ENCODE measurements at regions of chr2 and their contacts with region 1.

Region 1: GRCh38 chr2:26061539-26061938 is 27.7 kb downstream of the RAB10 start:
- DNase-seq: no peak
- ATAC-seq: no peak
- H3K4me3 ChIP-seq: no peak overlapping the region
- H3K4me3 Mint-ChIP-seq: no peak overlapping the region
- H3K27ac ChIP-seq: no peak overlapping the region
- H3K27ac Mint-ChIP-seq: no peak overlapping the region
- H3K4me1 ChIP-seq: peaks cover 2 to 20% of the 10 kb centered on the region in 2 experiments
- H3K4me1 Mint-ChIP-seq: peaks cover 45 to 49% (median 47%) of the 10 kb centered on the region in 3 donors
- H3K27me3 ChIP-seq: no peaks in the 10 kb centered on the region
- H3K27me3 Mint-ChIP-seq: no peaks in the 10 kb centered on the region

Region 2: GRCh38 chr2:26033818-26034636 is 27.5 kb before region 1 on chr2 and contains the start of gene RAB10:
- CTCF ChIA-PET with region 1: no interaction called
- POLR2A ChIA-PET with region 1: no interaction called
- DNase-seq: peak; percentile 95 to 99 (median 98)
- ATAC-seq: peak; percentile 84 to 94 (median 89)
- H3K4me3 ChIP-seq: peak within 1 kb of the TSS; percentile 87 to 97
- H3K4me3 Mint-ChIP-seq: peak within 1 kb of the TSS; percentile 94 to 95 (median 94)
- H3K27ac ChIP-seq: peak within 1 kb of the TSS; percentile 86
- H3K27ac Mint-ChIP-seq: peak within 1 kb of the TSS; percentile 93 to 95
- H3K4me1 ChIP-seq: peaks cover 17 to 40% of the 10 kb centered on the region in 2 experiments
- H3K4me1 Mint-ChIP-seq: peaks cover 36 to 56% (median 46%) of the 10 kb centered on the region in 3 donors
- H3K27me3 ChIP-seq: no peaks in the 10 kb centered on the region
- H3K27me3 Mint-ChIP-seq: no peaks in the 10 kb centered on the region
- total RNA-seq, gene RAB10: 35.0 to 78.7 (median 71.2) TPM

Region 3: GRCh38 chr2:26043862-26044696 is 17.5 kb before region 1 on chr2:
- CTCF ChIA-PET with region 1: no interaction called
- POLR2A ChIA-PET with region 1: no interaction called
- DNase-seq: peak in 2 of 35 experiments; percentile 16 to 45
- ATAC-seq: peak in 1 of 4 experiments; percentile 79
- H3K4me3 ChIP-seq: peak overlapping the region in 1 of 2 donors; percentile 1
- H3K4me3 Mint-ChIP-seq: peak overlapping the region; percentile 3 to 49 (median 19)
- H3K27ac ChIP-seq: peak overlapping the region; percentile 20
- H3K27ac Mint-ChIP-seq: peak overlapping the region; percentile 5 to 38
- H3K4me1 ChIP-seq: peaks cover 6 to 33% of the 10 kb centered on the region in 2 experiments
- H3K4me1 Mint-ChIP-seq: peaks cover 70 to 75% (median 73%) of the 10 kb centered on the region in 3 donors
- H3K27me3 ChIP-seq: no peaks in the 10 kb centered on the region
- H3K27me3 Mint-ChIP-seq: no peaks in the 10 kb centered on the region

Region 4: DNA sequence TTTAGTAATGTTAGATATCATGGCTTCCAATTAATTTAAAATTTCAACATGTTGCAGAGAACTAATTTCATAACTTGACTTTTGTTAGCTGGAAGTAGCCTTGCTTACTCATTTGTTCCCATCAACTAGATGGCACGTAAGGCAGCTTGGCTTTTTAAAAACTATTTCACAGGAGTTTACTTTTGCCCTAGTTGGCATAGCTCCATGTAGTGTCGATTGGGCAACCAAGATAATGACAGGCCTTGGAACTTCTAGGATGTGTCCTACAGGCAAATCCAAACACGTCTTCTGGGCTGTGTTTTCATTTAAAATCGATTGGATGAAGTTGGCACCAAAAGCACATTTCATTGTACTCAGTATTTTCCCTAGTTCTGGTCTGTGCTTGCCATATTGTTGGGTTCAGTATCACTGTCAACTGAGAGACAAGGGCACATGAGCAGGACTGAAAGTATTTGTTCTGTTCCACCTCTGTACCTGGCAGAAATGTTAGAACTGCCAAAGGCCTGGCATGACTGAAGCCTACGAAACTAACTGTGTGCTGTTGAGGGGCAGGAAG is 212.6 kb after region 1 on chr2:
- CTCF ChIA-PET with region 1: no interaction called
- POLR2A ChIA-PET with region 1: interaction called in 1 of 2 experiments, 12 read pairs
- DNase-seq: no peak
- ATAC-seq: no peak
- H3K4me3 ChIP-seq: no peak overlapping the region
- H3K4me3 Mint-ChIP-seq: no peak overlapping the region
- H3K27ac ChIP-seq: no peak overlapping the region
- H3K27ac Mint-ChIP-seq: no peak overlapping the region
- H3K4me1 ChIP-seq: no peaks in the 10 kb centered on the region
- H3K4me1 Mint-ChIP-seq: peaks cover 0 to 3% (median 0%) of the 10 kb centered on the region in 3 donors
- H3K27me3 ChIP-seq: no peaks in the 10 kb centered on the region
- H3K27me3 Mint-ChIP-seq: no peaks in the 10 kb centered on the region

Region 5: GRCh38 chr2:26330113-26330549 is 268.6 kb after region 1 on chr2:
- CTCF ChIA-PET with region 1: no interaction called
- POLR2A ChIA-PET with region 1: no interaction called
- DNase-seq: peak; percentile 54 to 86 (median 78)
- ATAC-seq: peak; percentile 90 to 100 (median 98)
- H3K4me3 ChIP-seq: no peak overlapping the region
- H3K4me3 Mint-ChIP-seq: no peak overlapping the region
- H3K27ac ChIP-seq: no peak overlapping the region
- H3K27ac Mint-ChIP-seq: no peak overlapping the region
- H3K4me1 ChIP-seq: peaks cover 0 to 6% of the 10 kb centered on the region in 2 experiments
- H3K4me1 Mint-ChIP-seq: peaks cover 6 to 10% (median 10%) of the 10 kb centered on the region in 3 donors
- H3K27me3 ChIP-seq: no peaks in the 10 kb centered on the region
- H3K27me3 Mint-ChIP-seq: no peaks in the 10 kb centered on the region

Measured in T-cell (primary cell).